ENCODE measurements at regions of chr14 and their contacts with region 1.

Region 1: DNA sequence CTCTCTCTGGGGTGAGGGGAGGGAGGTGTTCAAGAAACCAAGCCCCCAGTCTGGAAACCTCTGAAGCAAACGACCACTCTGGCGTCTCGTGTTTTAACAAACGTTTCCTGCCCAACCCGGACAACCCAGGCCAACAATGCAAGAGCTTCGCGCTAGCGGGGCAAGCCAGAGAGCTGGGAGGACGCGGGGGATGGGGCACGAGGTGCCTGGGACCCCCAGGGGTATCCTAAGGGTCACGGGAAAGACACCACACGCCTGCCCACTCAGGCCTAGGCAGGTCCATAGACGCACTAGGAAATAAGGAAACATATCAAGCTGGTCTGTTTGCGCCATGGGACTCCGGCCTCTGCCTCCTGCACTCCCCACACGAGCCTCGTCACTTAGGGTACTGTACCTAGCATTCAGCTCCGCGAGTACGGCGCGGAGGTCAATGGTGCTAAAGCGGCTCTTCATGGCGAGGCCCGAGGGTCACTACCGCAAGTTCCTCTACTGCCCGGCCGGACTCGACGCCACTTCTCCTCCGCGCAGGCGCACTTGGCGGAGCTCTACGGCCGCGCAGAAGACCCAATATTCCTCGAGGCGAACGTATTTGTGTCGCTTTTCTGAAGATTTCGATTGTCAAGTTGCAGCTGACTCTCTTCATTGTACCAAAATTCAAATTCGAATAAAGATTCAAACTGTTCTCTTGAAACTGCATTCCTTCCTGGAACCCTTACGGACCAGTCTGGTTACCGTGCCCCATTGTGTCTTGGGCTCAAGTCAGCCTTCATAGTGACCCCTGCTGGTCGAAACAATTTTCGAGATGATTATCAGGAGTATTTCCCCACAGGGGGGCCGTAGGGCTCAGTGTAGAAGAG is at the start of gene NEMF:
- DNase-seq: peak; percentile 90
- total RNA-seq, gene NEMF: 17.0 and 43.6 TPM in 2 replicates

Region 2: GRCh38 chr14:49950275-49951228 is 98.0 kb after region 1 on chr14:
- in situ Hi-C with region 1: no loop called
- DNase-seq: peak; percentile 47

Region 3: DNA sequence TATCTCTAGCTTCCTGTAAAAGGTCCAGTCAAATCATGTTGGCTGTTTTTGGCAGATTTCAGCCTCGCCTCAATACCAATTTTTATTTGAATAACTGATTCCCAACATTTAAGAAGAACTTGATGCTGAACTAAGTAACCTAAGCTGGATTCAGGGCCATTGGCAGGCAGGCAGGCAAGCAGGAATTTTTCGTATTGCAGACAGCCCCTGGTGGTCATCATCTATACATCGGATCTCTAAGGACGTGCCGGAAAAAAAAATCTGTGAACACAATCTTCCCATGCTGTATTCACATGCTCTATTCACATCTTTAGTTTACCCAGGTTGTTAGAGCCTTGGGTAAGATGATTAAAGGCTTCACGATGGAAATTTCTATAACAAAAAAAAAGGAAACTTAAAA is 256.8 kb after region 1 on chr14:
- in situ Hi-C with region 1: no loop called
- DNase-seq: no peak

Region 4: DNA sequence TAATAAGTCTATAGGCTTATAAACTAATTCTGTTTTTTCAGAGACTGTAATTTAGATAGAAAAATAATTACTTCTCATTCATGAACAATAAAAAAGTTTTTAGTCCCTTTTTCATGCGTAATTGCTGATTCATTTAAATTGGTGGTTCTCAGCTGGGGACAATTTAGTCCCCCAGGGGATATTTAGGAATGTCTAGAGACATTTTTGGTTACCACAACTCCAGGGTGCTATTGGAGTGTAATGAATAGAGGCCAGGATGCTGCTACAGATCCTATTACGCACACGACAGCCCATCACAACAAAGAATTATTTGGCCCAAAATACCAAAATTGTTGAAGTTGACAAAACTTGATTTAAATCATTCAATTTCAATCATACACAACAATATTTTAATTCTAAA is 286.7 kb after region 1 on chr14:
- in situ Hi-C with region 1: loop called (anchors 25 kb)
- DNase-seq: no peak

Measured in Caki2 (cell line).